ENCODE measurements at regions of chr12 and their contacts with region 1.

Region 1: GRCh38 chr12:68358532-68359485 is 26.6 kb upstream of the MDM1 start:
- DNase-seq: peak; percentile 71
- H3K4me3 Mint-ChIP-seq: no peak overlapping the region
- H3K27ac Mint-ChIP-seq: no peak overlapping the region
- H3K4me1 Mint-ChIP-seq: peaks cover 21% of the 10 kb centered on the region
- H3K27me3 Mint-ChIP-seq: no peaks in the 10 kb centered on the region

Region 2: GRCh38 chr12:68374307-68374982 is 15.6 kb after region 1 on chr12:
- CTCF ChIA-PET with region 1: interaction called, 11 read pairs
- POLR2A ChIA-PET with region 1: interaction called, 30 read pairs
- intact Hi-C with region 1: no loop called
- DNase-seq: peak; percentile 84
- H3K4me3 Mint-ChIP-seq: peak overlapping the region; percentile 27
- H3K27ac Mint-ChIP-seq: peak overlapping the region; percentile 98
- H3K4me1 Mint-ChIP-seq: peaks cover 45% of the 10 kb centered on the region
- H3K27me3 Mint-ChIP-seq: no peaks in the 10 kb centered on the region

Region 3: GRCh38 chr12:68641138-68641537 is 282.3 kb after region 1 on chr12:
- CTCF ChIA-PET with region 1: interaction called, 3 read pairs
- POLR2A ChIA-PET with region 1: no interaction called
- intact Hi-C with region 1: loop called (anchors 5 kb)
- DNase-seq: peak; percentile 68
- H3K4me3 Mint-ChIP-seq: peak overlapping the region; percentile 32
- H3K27ac Mint-ChIP-seq: peak overlapping the region; percentile 8
- H3K4me1 Mint-ChIP-seq: peaks cover 76% of the 10 kb centered on the region
- H3K27me3 Mint-ChIP-seq: no peaks in the 10 kb centered on the region

Region 4: GRCh38 chr12:68745904-68746571 is 387.2 kb after region 1 on chr12 and contains the start of gene SLC35E3:
- CTCF ChIA-PET with region 1: no interaction called
- POLR2A ChIA-PET with region 1: no interaction called
- intact Hi-C with region 1: loop called (anchors 5 kb)
- DNase-seq: peak; percentile 96
- H3K4me3 Mint-ChIP-seq: peak within 1 kb of the TSS; percentile 92
- H3K27ac Mint-ChIP-seq: peak within 1 kb of the TSS; percentile 64
- H3K4me1 Mint-ChIP-seq: peaks cover 23% of the 10 kb centered on the region
- H3K27me3 Mint-ChIP-seq: no peaks in the 10 kb centered on the region
- total RNA-seq, gene SLC35E3: 4.1 to 5.3 TPM

Measured in activated CD4-positive, alpha-beta memory T cell treated with anti-CD3 and anti-CD28 coated beads for 36 hours (primary cell).